GM13976 (cell line): ENCODE measurements at regions of chrX and their contacts with region 1.

Region 1: DNA sequence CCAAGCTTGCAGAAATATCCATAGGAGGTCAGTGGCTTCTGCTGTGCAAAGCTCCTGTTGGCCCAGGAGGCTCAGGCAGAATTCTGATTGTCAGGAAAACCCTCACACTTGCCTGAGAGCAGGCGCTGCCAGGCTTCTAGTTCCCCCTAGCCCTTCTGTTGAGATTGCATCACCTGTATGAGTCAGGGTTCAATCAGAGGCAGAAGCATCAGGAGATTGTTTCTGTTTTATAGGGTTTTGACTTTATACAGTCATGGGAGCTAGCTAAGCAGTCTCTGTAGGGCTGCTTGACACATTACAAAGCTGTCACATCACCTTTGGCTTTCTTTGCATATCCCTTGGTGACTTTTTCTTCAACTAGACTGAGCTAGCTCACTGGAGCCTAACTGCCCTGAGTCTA is 27.8 kb downstream of the DIPK2B start:
- DNase-seq: no peak
- CTCF ChIP-seq: no peak

Region 2: DNA sequence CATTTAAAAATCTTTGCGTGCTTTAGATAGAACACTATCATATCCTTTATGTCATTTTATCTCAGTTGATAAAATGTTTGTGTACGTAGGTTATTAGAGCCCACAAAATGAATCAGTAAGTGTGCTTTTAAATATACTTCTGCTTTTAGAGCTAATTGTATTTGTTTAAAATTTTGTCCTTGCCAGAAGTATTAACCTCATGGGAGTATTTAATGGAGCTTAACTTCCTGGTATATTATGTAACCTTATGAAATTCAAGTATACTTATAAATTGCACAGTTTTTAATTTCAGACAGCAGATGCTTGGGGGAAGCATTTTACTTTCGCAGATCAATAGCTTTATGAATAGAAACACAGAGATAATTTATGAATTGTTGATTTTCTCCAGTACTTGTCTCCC is 62.4 kb before region 1 on chrX:
- in situ Hi-C with region 1: loop called (anchors 10 kb)
- DNase-seq: no peak
- CTCF ChIP-seq: no peak